Activated CD4-positive, alpha-beta T cell treated with anti-CD3 and anti-CD28 coated beads, Interleukin-2, amount 10 ng/mL, durations not matched to agents 24 days and 14 days (primary cell): ENCODE measurements at regions of chr2 and their contacts with region 1.

Region 1: GRCh38 chr2:38106405-38107094 is 30.6 kb upstream of the CYP1B1 start:
- DNase-seq: no peak
- H3K4me3 Mint-ChIP-seq: peak overlapping the region; percentile 60
- H3K27ac Mint-ChIP-seq: peak overlapping the region; percentile 79
- H3K4me1 Mint-ChIP-seq: peaks cover 20% of the 10 kb centered on the region
- H3K27me3 Mint-ChIP-seq: peaks cover 20% of the 10 kb centered on the region

Region 2: GRCh38 chr2:38037757-38038621 is 68.6 kb before region 1 on chr2:
- intact Hi-C with region 1: loop called (anchors 5 kb)
- DNase-seq: peak; percentile 67
- H3K4me3 Mint-ChIP-seq: peak overlapping the region; percentile 83
- H3K27ac Mint-ChIP-seq: peak overlapping the region; percentile 74
- H3K4me1 Mint-ChIP-seq: peaks cover 15% of the 10 kb centered on the region
- H3K27me3 Mint-ChIP-seq: peaks cover 38% of the 10 kb centered on the region

Region 3: DNA sequence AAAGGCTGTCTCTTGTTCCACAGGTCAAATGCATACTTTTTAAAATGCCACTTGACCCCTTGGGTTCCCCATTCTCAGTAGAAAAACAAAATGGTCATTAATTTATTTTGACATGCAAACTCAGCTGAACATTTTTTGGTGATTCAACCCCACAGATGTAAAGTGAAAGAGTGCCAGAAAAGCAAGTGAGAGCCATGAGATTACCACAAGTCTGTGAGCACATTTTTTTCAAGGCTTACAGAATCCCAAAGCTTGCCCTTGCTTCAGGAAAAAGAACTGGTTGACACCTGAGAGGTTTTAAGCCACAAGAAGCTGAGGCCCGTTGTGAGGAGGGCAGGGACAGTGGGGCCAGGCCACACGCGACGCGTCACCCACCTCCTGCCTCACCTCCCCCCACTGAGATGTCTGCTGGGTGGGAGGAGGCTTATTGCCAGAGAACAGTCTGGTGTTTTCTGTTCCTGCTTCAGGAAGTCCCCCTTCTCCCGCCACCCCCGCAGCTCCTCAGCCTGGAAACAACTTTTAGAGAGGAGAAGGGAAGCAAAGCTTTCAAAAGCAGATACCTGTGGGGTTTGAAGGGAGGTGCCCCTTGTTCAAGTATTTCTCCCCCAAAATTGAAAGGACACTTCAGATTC is 39.8 kb after region 1 on chr2:
- intact Hi-C with region 1: loop called (anchors 5 kb)
- DNase-seq: peak; percentile 58
- H3K4me3 Mint-ChIP-seq: peak overlapping the region; percentile 5
- H3K27ac Mint-ChIP-seq: peak overlapping the region; percentile 61
- H3K4me1 Mint-ChIP-seq: peaks cover 15% of the 10 kb centered on the region
- H3K27me3 Mint-ChIP-seq: peaks cover 8% of the 10 kb centered on the region